ENCODE measurements at regions of chr17 and their contacts with region 1.

Region 1: GRCh38 chr17:78781948-78782916 is at the start of gene CYTH1:
- DNase-seq: peak; percentile 95 to 99 (median 97)
- H3K4me3 ChIP-seq: peak within 1 kb of the TSS; percentile 96
- H3K4me3 Mint-ChIP-seq: peak within 1 kb of the TSS; percentile 90 to 95 (median 93)
- H3K27ac ChIP-seq: peak within 1 kb of the TSS; percentile 84
- H3K27ac Mint-ChIP-seq: peak within 1 kb of the TSS; percentile 89 to 99 (median 94)
- H3K4me1 ChIP-seq: peaks cover 68% of the 10 kb centered on the region
- H3K4me1 Mint-ChIP-seq: peaks cover 53 to 68% (median 65%) of the 10 kb centered on the region in 3 donors
- H3K27me3 ChIP-seq: no peaks in the 10 kb centered on the region
- H3K27me3 Mint-ChIP-seq: peaks cover 0 to 4% of the 10 kb centered on the region in 2 donors
- total RNA-seq, gene CYTH1: 115 to 129 TPM

Region 2: DNA sequence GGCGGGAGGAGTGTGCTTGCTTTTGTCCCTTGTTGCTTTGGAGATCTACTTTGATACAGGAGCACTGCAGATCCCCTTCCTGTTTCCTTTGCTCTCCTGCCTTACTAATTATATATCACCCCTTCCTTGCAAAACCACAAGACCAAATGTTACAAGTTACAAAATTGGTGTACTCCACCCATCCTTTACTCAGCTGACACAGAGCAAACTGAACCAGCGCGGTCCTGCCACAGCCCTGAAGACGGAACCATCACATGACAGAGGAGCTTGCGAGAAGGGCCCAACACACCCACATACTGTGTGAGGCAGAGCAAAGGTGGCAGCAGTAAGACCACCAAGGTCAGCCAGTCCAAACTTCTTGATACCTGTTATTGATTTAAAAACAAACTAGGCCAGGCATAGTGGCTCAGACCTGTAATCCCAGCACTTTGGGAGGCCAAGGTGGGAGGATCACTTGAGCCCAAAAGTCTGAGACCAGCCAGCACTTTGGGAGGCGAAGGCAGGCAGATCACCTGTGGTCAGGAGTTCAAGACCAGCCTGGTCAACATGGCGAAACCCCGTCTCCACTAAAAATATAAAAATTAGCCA is 33.4 kb before region 1 on chr17:
- CTCF ChIA-PET with region 1: interaction called, 16 read pairs
- POLR2A ChIA-PET with region 1: interaction called, 21 read pairs
- DNase-seq: peak; percentile 61 to 89 (median 88)
- H3K4me3 ChIP-seq: peak overlapping the region; percentile 65
- H3K4me3 Mint-ChIP-seq: peak overlapping the region; percentile 69 to 88 (median 78)
- H3K27ac ChIP-seq: peak overlapping the region; percentile 73
- H3K27ac Mint-ChIP-seq: peak overlapping the region; percentile 79 to 98 (median 90)
- H3K4me1 ChIP-seq: peaks cover 96% of the 10 kb centered on the region
- H3K4me1 Mint-ChIP-seq: peaks cover 93 to 100% (median 100%) of the 10 kb centered on the region in 3 donors
- H3K27me3 ChIP-seq: no peaks in the 10 kb centered on the region
- H3K27me3 Mint-ChIP-seq: no peaks in the 10 kb centered on the region

Region 3: GRCh38 chr17:78759203-78759968 is 22.8 kb before region 1 on chr17:
- CTCF ChIA-PET with region 1: interaction called, 10 read pairs
- POLR2A ChIA-PET with region 1: interaction called, 15 read pairs
- DNase-seq: peak; percentile 59 to 94 (median 85)
- H3K4me3 ChIP-seq: peak overlapping the region; percentile 38
- H3K4me3 Mint-ChIP-seq: peak overlapping the region; percentile 20 to 84 (median 77)
- H3K27ac ChIP-seq: peak overlapping the region; percentile 91
- H3K27ac Mint-ChIP-seq: peak overlapping the region; percentile 90 to 99 (median 97)
- H3K4me1 ChIP-seq: peaks cover 92% of the 10 kb centered on the region
- H3K4me1 Mint-ChIP-seq: peaks cover 79 to 91% (median 89%) of the 10 kb centered on the region in 3 donors
- H3K27me3 ChIP-seq: no peaks in the 10 kb centered on the region
- H3K27me3 Mint-ChIP-seq: peaks cover 0 to 1% of the 10 kb centered on the region in 2 donors

Region 4: DNA sequence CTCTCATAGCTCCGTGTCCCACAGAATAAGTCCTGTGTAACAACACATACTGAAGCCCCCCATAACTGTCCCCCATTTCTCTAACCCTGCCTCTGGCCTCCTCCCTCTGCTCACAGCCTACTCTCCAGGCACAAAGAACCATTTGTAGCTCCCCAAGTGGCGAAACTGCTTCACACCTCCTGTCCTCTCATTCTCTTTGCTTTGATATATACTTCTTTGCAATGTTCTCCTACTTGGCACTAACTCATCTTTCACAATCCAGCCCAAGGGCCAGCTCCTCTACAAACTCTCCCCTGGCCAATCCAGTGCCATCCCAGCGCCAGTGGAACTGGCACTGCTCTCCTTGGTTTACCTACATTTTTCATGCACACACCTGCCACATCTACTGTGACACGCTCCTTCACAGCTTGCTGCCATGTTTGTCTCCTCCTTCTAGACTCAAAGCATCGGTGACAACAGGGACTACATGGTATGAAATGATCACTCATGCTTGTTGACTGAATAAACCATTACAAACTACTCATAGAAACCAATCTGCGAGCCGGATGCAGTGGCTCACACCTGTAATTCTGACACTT is 12.9 kb before region 1 on chr17:
- CTCF ChIA-PET with region 1: interaction called, 16 read pairs
- POLR2A ChIA-PET with region 1: interaction called, 6 read pairs
- DNase-seq: no peak
- H3K4me3 ChIP-seq: peak overlapping the region; percentile 32
- H3K4me3 Mint-ChIP-seq: no peak overlapping the region
- H3K27ac ChIP-seq: no peak overlapping the region
- H3K27ac Mint-ChIP-seq: no peak overlapping the region
- H3K4me1 ChIP-seq: peaks cover 97% of the 10 kb centered on the region
- H3K4me1 Mint-ChIP-seq: peaks cover 36 to 40% (median 39%) of the 10 kb centered on the region in 3 donors
- H3K27me3 ChIP-seq: no peaks in the 10 kb centered on the region
- H3K27me3 Mint-ChIP-seq: no peaks in the 10 kb centered on the region

Region 5: DNA sequence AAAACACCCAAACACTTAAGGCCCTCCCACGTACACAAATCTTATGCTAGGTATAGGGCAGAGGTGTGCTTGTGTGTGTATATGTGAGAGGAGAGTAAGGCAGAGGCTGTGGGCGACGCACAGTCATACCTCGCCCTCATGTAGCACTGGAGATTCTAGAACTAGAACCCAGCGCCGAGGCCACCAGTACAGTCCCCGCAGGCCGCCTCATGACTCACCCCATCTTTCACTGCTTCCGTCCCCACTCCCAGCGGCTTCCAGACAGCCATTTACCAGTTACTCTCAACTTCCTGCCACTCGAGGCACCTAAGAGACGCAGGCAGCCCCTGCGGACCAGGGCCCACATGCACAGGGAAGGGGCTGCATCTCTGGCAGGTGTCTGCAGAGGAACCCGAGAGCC is 23.1 kb after region 1 on chr17:
- CTCF ChIA-PET with region 1: interaction called, 3 read pairs
- POLR2A ChIA-PET with region 1: interaction called, 12 read pairs
- DNase-seq: peak in 4 of 5 donors; percentile 57 to 79 (median 62)
- H3K4me3 ChIP-seq: no peak overlapping the region
- H3K4me3 Mint-ChIP-seq: peak overlapping the region; percentile 52 to 77 (median 66)
- H3K27ac ChIP-seq: peak overlapping the region; percentile 21
- H3K27ac Mint-ChIP-seq: peak overlapping the region; percentile 85 to 98 (median 94)
- H3K4me1 ChIP-seq: peaks cover 47% of the 10 kb centered on the region
- H3K4me1 Mint-ChIP-seq: peaks cover 48 to 51% (median 50%) of the 10 kb centered on the region in 3 donors
- H3K27me3 ChIP-seq: no peaks in the 10 kb centered on the region
- H3K27me3 Mint-ChIP-seq: no peaks in the 10 kb centered on the region